Caco-2 (cell line): ENCODE measurements at regions of chr20 and their contacts with region 1.

Region 1: GRCh38 chr20:32289661-32290431 is 12.4 kb downstream of the KIF3B start:
- DNase-seq: peak; percentile 90 to 94
- H3K4me3 ChIP-seq: no peak overlapping the region
- H3K4me3 Mint-ChIP-seq: peak overlapping the region; percentile 54
- H3K27ac Mint-ChIP-seq: peak overlapping the region; percentile 81
- H3K4me1 ChIP-seq: peaks cover 52% of the 10 kb centered on the region
- H3K4me1 Mint-ChIP-seq: peaks cover 36% of the 10 kb centered on the region
- H3K27me3 ChIP-seq: no peaks in the 10 kb centered on the region
- H3K27me3 Mint-ChIP-seq: no peaks in the 10 kb centered on the region
- CTCF ChIP-seq: no peak

Region 2: DNA sequence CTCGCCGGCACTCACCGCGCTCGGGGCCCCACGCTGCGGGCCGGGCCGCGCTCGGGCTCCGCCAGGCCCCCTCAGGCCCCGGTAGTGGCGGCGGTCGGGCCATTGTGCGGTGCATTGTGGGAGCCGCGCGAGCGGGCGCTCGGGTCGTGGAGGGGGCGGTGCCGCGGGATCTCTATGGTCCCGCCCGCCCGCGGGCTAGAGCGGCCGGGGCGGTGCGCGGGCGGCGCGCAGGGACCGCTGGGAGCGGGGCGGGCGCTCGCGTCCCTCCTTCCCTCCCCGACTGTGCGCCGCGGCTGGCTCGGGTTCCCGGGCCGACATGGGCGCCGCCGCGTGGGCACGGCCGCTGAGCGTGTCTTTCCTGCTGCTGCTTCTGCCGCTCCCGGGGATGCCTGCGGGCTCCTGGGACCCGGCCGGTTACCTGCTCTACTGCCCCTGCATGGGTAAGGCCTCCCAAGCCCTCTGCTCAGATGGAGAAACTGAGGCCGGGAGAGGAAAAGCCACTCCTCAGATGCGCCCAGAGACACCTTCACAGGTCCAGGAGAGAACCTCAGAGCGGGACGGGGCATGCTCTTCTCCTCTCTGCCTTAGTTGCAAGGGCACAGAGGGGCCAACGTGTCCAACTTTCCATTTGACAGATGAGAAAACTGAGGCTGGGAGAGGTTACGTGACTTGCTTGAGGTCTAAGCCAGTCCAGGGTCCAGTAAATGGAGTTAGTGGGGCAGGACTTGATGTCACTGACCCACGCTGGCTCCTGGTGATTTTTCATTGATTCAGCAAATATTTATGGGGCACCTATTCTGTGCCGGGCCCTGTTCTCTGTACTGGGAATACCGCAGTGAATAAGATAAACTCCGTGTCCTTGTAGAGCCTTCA is 82.0 kb before region 1 on chr20 and contains the starts of genes PLAGL2 and POFUT1:
- CTCF ChIA-PET with region 1: interaction called, 3 read pairs
- POLR2A ChIA-PET with region 1: no interaction called
- intact Hi-C with region 1: loop called (anchors 2 kb)
- DNase-seq: peak; percentile 95 to 100
- H3K4me3 ChIP-seq: peak within 1 kb of the TSS; percentile 72
- H3K4me3 Mint-ChIP-seq: peak within 1 kb of the TSS; percentile 92
- H3K27ac Mint-ChIP-seq: peak within 1 kb of the TSS; percentile 89
- H3K4me1 ChIP-seq: peaks cover 46% of the 10 kb centered on the region
- H3K4me1 Mint-ChIP-seq: peaks cover 71% of the 10 kb centered on the region
- H3K27me3 ChIP-seq: no peaks in the 10 kb centered on the region
- H3K27me3 Mint-ChIP-seq: no peaks in the 10 kb centered on the region
- CTCF ChIP-seq: peak; percentile 9 to 55
- total RNA-seq, gene PLAGL2: 89.6 and 96.1 TPM in 2 replicates
- total RNA-seq, gene POFUT1: 148 and 158 TPM in 2 replicates

Region 3: DNA sequence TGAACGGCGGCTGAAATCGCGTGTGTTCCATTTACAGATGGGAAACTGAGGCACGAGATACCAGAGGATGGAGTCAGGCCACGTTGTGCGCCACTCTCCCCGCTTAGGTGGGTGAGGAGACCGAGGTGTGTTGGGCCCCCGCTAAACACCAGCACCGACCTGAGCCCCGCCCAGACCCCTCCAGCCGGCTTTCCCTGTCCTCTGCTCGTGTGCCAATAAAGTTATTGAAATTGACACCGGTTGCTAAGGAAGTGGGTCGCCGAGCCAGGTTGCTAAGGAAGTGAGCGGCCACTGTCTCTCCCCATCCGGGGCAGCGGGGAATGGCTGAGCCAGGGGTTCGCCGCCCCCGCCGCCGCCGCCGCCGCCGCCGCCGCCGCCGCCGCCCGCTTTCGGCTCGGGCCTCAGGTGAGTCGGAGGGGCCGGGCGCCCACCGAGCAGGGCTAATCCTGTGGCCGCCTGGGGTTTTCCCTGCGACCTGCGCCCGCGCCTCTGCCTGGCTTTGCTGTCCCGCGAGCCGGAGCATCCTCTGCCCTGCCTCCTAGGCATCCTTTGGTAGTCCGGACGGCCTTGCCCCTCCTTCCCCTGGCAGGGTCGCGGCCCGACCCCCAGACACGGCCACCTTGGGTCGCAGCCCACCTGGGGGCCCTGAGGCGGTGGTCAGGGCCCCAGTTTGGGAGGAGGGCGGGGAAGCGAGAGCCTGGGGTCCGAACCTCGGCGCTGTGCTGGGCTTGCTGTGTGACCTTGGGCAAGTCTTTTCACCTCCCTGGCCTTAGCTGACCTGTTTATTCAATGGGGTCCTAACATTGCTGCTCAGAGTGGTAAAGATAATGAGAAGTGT is 12.3 kb before region 1 on chr20 and contains the start of gene KIF3B:
- CTCF ChIA-PET with region 1: no interaction called
- POLR2A ChIA-PET with region 1: no interaction called
- intact Hi-C with region 1: loop called (anchors 1 kb)
- DNase-seq: peak; percentile 97 to 98
- H3K4me3 ChIP-seq: peak within 1 kb of the TSS; percentile 84
- H3K4me3 Mint-ChIP-seq: peak within 1 kb of the TSS; percentile 90
- H3K27ac Mint-ChIP-seq: peak within 1 kb of the TSS; percentile 88
- H3K4me1 ChIP-seq: peaks cover 16% of the 10 kb centered on the region
- H3K4me1 Mint-ChIP-seq: peaks cover 20% of the 10 kb centered on the region
- H3K27me3 ChIP-seq: no peaks in the 10 kb centered on the region
- H3K27me3 Mint-ChIP-seq: no peaks in the 10 kb centered on the region
- CTCF ChIP-seq: no peak
- total RNA-seq, gene KIF3B: 49.0 and 50.0 TPM in 2 replicates

Region 4: GRCh38 chr20:32325706-32326503 is 36.1 kb after region 1 on chr20:
- CTCF ChIA-PET with region 1: interaction called, 3 read pairs
- POLR2A ChIA-PET with region 1: interaction called, 4 read pairs
- intact Hi-C with region 1: loop called (anchors 1 kb)
- DNase-seq: peak; percentile 79 to 85
- H3K4me3 ChIP-seq: no peak overlapping the region
- H3K4me3 Mint-ChIP-seq: peak overlapping the region; percentile 41
- H3K27ac Mint-ChIP-seq: peak overlapping the region; percentile 78
- H3K4me1 ChIP-seq: peaks cover 45% of the 10 kb centered on the region
- H3K4me1 Mint-ChIP-seq: peaks cover 21% of the 10 kb centered on the region
- H3K27me3 ChIP-seq: no peaks in the 10 kb centered on the region
- H3K27me3 Mint-ChIP-seq: no peaks in the 10 kb centered on the region
- CTCF ChIP-seq: no peak

Region 5: GRCh38 chr20:32382102-32382950 is 92.5 kb after region 1 on chr20:
- CTCF ChIA-PET with region 1: no interaction called
- POLR2A ChIA-PET with region 1: no interaction called
- intact Hi-C with region 1: no loop called
- DNase-seq: no peak
- H3K4me3 ChIP-seq: no peak overlapping the region
- H3K4me3 Mint-ChIP-seq: no peak overlapping the region
- H3K27ac Mint-ChIP-seq: peak overlapping the region; percentile 34
- H3K4me1 ChIP-seq: peaks cover 4% of the 10 kb centered on the region; the same call in 1 of the 2 replicates
- H3K4me1 Mint-ChIP-seq: peaks cover 10% of the 10 kb centered on the region
- H3K27me3 ChIP-seq: no peaks in the 10 kb centered on the region
- H3K27me3 Mint-ChIP-seq: no peaks in the 10 kb centered on the region
- CTCF ChIP-seq: no peak